ENCODE measurements at regions of chr2 and their contacts with region 1.

Region 1: DNA sequence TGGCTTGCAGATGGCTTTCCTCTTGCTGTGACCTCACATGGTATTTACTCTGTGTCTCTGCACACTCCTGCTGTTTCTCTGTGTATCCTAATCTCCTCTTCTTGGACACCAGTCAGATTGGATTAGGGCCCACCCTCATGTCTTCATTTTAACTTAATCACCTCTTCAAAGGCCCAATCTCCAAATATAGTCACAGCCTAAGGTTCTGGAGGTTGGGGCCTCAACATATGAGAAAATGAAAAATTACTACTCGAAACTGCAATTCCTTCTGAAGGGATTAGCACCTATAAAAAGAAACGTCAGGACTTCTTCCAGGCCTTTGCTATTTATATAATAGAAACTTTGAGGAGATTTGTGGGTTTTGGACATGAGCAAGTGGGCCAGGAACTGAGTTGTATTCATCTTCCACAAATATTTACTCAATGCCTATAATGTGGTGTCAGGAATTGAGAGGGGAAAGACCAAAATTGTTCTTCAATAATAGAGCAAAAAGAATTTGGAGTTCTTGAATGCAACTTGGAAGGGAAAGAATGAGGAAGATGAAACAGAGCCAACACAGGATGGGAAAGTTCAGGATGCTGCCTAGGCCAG is 270.0 kb upstream of the FN1 start:
- DNase-seq: no peak
- H3K4me3 ChIP-seq: no peak overlapping the region
- H3K27ac ChIP-seq: peak overlapping the region; percentile 56 to 57
- H3K4me1 ChIP-seq: peaks cover 0 to 22% (median 12%) of the 10 kb centered on the region in 4 donors
- H3K27me3 ChIP-seq: no peaks in the 10 kb centered on the region
- CTCF ChIP-seq: no peak

Region 2: GRCh38 chr2:215619022-215619958 is 86.6 kb before region 1 on chr2:
- intact Hi-C with region 1: loop called (anchors 10 kb)
- DNase-seq: no peak
- H3K4me3 ChIP-seq: no peak overlapping the region
- H3K27ac ChIP-seq: peak overlapping the region in 1 of 2 donors; percentile 6
- H3K4me1 ChIP-seq: peaks cover 0 to 48% (median 5%) of the 10 kb centered on the region in 4 donors
- H3K27me3 ChIP-seq: no peaks in the 10 kb centered on the region
- CTCF ChIP-seq: no peak